Calu3 (cell line): ENCODE measurements at regions of chr11 and their contacts with region 1.

Region 1: GRCh38 chr11:72722050-72722748 is 30.0 kb downstream of the ARAP1 start:
- DNase-seq: peak; percentile 84
- H3K4me3 Mint-ChIP-seq: peak overlapping the region; percentile 66
- H3K27ac Mint-ChIP-seq: peak overlapping the region; percentile 57
- H3K4me1 Mint-ChIP-seq: peaks cover 40% of the 10 kb centered on the region
- H3K27me3 Mint-ChIP-seq: no peaks in the 10 kb centered on the region
- CTCF ChIP-seq: no peak

Region 2: DNA sequence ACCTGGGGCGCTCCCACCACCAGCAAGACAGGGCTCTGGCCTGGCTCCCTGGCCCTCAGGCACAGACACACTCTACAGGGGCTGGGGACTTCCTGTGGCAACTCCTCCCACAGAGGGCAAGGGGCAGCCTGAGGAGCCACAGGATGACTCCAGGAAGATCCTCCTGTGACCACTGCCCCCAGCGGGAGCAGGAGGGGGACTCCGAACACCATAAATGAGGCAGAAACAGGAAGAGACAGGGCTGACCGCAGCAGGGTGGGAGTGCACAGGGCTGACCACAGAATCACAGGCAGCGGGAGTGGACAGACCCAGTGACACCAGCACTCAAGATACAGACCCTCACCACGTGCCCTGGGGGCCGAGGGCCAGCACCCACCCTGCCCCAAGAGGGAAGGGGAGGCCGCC is 19.2 kb after region 1 on chr11:
- CTCF ChIA-PET with region 1: interaction called, 10 read pairs
- intact Hi-C with region 1: no loop called
- DNase-seq: no peak
- H3K4me3 Mint-ChIP-seq: no peak overlapping the region
- H3K27ac Mint-ChIP-seq: no peak overlapping the region
- H3K4me1 Mint-ChIP-seq: peaks cover 45% of the 10 kb centered on the region
- H3K27me3 Mint-ChIP-seq: no peaks in the 10 kb centered on the region
- CTCF ChIP-seq: no peak

Region 3: GRCh38 chr11:72793425-72794367 is 71.5 kb after region 1 on chr11 and contains the start of gene STARD10:
- CTCF ChIA-PET with region 1: interaction called, 48 read pairs
- intact Hi-C with region 1: loop called (anchors 1 kb)
- DNase-seq: peak; percentile 93
- H3K4me3 Mint-ChIP-seq: peak within 1 kb of the TSS; percentile 92
- H3K27ac Mint-ChIP-seq: peak within 1 kb of the TSS; percentile 89
- H3K4me1 Mint-ChIP-seq: peaks cover 26% of the 10 kb centered on the region
- H3K27me3 Mint-ChIP-seq: no peaks in the 10 kb centered on the region
- CTCF ChIP-seq: peak; percentile 94
- total RNA-seq, gene STARD10: 55.1 and 68.9 TPM in 2 replicates

Region 4: DNA sequence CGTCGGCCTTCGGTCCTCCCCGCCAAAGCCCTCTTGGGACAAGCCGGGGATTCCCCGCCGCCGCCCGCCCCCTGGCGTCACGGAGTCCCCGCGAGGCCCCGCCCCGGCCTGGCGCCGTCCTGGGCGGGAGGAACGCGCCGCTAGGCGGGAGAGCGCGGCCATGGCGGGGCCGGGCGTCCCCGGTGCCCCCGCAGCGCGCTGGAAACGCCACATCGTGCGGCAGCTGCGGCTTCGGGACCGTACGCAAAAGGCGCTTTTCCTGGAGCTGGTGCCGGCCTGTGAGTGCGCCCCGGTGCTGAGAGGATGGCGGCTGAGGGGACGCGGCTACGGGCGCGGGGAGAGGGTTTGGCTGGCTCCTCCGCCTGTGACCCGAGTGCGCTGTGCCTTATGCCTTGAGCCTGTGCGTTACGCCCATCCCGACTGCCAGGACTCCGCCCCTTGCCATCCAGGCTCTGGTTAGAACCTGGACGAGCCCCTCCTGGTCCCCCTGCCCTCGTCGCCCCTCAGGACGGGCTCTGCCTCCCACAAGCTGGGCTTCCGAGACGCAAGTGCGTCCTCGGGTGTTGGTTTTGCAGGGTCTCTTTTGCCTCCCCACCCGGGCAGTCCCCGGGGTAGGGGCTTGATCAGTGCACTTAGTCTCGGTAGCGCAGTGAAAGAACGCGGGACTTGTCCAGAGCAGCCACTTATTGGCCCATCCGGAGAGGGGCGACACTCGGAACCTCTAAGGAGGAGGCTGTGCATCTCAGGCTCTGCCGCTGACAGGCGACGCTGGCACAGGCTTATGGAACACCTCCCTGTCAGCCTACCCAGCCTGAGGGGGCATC is 92.3 kb after region 1 on chr11 and contains the start of gene ATG16L2:
- CTCF ChIA-PET with region 1: interaction called, 16 read pairs
- intact Hi-C with region 1: loop called (anchors 5 kb)
- DNase-seq: peak; percentile 94
- H3K4me3 Mint-ChIP-seq: peak within 1 kb of the TSS; percentile 88
- H3K27ac Mint-ChIP-seq: peak within 1 kb of the TSS; percentile 86
- H3K4me1 Mint-ChIP-seq: peaks cover 26% of the 10 kb centered on the region
- H3K27me3 Mint-ChIP-seq: no peaks in the 10 kb centered on the region
- CTCF ChIP-seq: no peak
- total RNA-seq, gene ATG16L2: 28.7 and 29.1 TPM in 2 replicates

Region 5: DNA sequence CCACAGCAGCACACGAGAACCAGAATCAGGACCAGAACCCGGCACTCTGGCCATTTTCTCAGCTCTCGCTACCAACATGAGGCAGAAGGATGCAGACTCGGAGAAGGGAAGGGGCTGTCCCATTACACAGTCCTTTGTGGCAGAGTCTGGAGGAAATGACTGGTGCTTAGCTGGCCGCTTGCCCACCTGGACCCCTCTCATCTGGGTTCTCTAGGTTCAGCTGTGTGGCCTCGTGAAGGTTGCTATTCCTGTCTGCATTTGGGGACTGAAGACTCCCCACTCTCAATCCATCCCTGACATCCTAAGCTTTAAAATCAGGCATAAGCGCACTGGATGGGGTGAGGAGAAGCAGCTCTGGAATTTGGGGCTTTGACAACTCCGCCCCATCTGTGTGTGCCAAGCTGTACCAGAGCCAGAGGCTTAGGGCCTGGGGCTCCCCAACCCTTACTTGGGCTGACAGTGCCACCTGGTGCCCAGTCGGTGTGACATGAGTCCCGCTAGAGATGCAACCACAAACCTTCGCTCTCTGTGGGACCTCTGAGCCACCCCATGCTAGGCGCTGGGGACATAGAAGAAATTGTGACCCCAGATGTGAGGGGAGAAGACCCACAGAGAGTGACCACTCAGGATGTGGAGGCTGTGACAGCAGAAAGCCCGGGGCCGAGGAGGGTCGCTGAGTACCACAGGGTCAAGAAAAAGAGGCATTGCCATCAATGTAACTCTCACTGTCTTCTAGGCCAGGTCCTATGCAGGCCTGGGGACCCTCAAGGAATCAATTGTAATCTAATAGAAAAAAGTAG is 455.8 kb after region 1 on chr11:
- CTCF ChIA-PET with region 1: interaction called, 8 read pairs
- intact Hi-C with region 1: loop called (anchors 10 kb)
- DNase-seq: peak; percentile 82
- H3K4me3 Mint-ChIP-seq: no peak overlapping the region
- H3K27ac Mint-ChIP-seq: no peak overlapping the region
- H3K4me1 Mint-ChIP-seq: peaks cover 13% of the 10 kb centered on the region
- H3K27me3 Mint-ChIP-seq: peaks cover 18% of the 10 kb centered on the region
- CTCF ChIP-seq: peak; percentile 76

Region 6: GRCh38 chr11:73205661-73206343 is 483.6 kb after region 1 on chr11:
- CTCF ChIA-PET with region 1: no interaction called
- intact Hi-C with region 1: no loop called
- DNase-seq: no peak
- H3K4me3 Mint-ChIP-seq: no peak overlapping the region
- H3K27ac Mint-ChIP-seq: no peak overlapping the region
- H3K4me1 Mint-ChIP-seq: peaks cover 15% of the 10 kb centered on the region
- H3K27me3 Mint-ChIP-seq: no peaks in the 10 kb centered on the region
- CTCF ChIP-seq: no peak